ENCODE measurements at regions of chr9 and their contacts with region 1.

Region 1: DNA sequence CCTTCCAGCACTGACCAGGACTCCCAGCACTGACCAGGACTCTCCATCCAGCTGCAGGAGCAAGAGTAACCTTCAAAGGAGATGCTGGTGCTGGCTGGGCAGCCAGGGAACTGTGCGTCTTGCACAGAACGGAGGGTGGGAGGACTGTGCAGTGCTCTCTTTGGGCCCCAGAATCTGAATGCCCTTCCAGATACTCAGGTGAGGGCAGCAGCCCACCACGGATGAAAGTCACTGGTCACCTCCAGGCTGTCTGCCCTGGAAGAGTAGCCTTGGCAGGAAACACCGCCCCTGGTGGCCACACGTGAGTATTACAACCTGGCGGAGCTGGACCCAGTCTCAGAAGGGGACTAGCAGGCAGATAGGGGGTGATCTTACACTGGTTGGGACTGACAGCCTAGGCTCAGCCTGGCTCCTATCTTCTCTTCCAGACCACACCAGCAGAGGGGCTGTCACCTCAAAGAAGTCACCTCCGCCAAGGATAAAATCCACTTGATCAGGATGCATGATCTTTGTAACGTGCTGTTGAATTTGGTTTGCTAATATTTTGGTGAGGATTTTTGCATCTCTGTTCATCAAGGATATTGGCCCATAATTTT is 4.8 kb upstream of the SARDH start:
- DNase-seq: peak; percentile 45 to 78 (median 63)
- H3K4me3 ChIP-seq: no peak overlapping the region
- H3K4me3 Mint-ChIP-seq: no peak overlapping the region
- H3K27ac ChIP-seq: no peak overlapping the region
- H3K27ac Mint-ChIP-seq: peak overlapping the region in 1 of 8 donors; percentile 26
- H3K4me1 ChIP-seq: peaks cover 11% of the 10 kb centered on the region
- H3K4me1 Mint-ChIP-seq: peaks cover 0 to 12% (median 4%) of the 10 kb centered on the region in 3 donors
- H3K27me3 ChIP-seq: no peaks in the 10 kb centered on the region
- H3K27me3 Mint-ChIP-seq: peaks cover 4 to 28% of the 10 kb centered on the region in 2 donors

Region 2: GRCh38 chr9:133650026-133650425 is 92.9 kb before region 1 on chr9:
- CTCF ChIA-PET with region 1: no interaction called
- POLR2A ChIA-PET with region 1: no interaction called
- DNase-seq: no peak
- H3K4me3 ChIP-seq: no peak overlapping the region
- H3K4me3 Mint-ChIP-seq: no peak overlapping the region
- H3K27ac ChIP-seq: no peak overlapping the region
- H3K27ac Mint-ChIP-seq: peak overlapping the region in 1 of 8 donors; percentile 40
- H3K4me1 ChIP-seq: no peaks in the 10 kb centered on the region
- H3K4me1 Mint-ChIP-seq: no peaks in the 10 kb centered on the region
- H3K27me3 ChIP-seq: peaks cover 4% of the 10 kb centered on the region
- H3K27me3 Mint-ChIP-seq: peaks cover 12 to 25% of the 10 kb centered on the region in 2 donors

Region 3: DNA sequence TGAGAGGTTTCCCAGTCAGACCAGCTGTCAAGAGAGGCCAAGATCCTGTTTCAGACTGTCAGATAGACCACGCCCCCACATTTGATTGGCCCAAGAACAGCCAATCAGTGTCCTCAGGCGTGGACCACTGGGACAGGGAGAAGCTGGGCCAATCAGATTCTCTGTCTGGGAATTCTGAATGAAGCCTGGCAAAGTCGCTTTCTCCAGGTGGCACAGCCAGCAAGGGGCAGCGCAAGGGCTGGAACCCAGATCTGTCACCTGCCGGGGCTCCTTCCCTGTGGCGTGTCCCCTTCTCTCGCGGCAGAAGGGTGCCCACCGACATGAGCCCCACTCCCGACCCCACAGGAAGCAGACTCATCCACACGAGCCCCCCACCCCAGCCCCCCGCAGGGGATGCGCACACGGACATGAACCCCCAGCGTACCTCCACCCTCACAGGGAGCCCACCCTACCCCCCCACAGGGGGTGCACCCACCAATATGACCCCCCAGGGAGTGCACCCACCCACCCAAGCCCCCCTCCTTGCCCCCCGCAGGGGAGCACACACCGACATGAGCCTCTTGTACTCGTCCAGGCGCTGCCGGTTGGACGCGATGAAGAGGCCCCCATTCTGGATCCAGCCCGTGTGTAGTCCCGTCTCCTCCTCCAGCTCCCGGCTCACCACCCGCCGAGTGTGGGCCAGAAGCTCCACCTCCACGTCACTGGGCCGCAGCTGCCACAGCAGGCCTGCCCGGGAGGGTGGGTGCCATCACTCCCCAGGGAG is 10.9 kb before region 1 on chr9:
- CTCF ChIA-PET with region 1: interaction called, 12 read pairs
- POLR2A ChIA-PET with region 1: no interaction called
- DNase-seq: no peak
- H3K4me3 ChIP-seq: no peak overlapping the region
- H3K4me3 Mint-ChIP-seq: no peak overlapping the region
- H3K27ac ChIP-seq: no peak overlapping the region
- H3K27ac Mint-ChIP-seq: no peak overlapping the region
- H3K4me1 ChIP-seq: peaks cover 2% of the 10 kb centered on the region
- H3K4me1 Mint-ChIP-seq: peaks cover under 1 to 2% (median under 1%) of the 10 kb centered on the region in 3 donors
- H3K27me3 ChIP-seq: no peaks in the 10 kb centered on the region
- H3K27me3 Mint-ChIP-seq: peaks cover under 1 to 4% of the 10 kb centered on the region in 2 donors

Region 4: DNA sequence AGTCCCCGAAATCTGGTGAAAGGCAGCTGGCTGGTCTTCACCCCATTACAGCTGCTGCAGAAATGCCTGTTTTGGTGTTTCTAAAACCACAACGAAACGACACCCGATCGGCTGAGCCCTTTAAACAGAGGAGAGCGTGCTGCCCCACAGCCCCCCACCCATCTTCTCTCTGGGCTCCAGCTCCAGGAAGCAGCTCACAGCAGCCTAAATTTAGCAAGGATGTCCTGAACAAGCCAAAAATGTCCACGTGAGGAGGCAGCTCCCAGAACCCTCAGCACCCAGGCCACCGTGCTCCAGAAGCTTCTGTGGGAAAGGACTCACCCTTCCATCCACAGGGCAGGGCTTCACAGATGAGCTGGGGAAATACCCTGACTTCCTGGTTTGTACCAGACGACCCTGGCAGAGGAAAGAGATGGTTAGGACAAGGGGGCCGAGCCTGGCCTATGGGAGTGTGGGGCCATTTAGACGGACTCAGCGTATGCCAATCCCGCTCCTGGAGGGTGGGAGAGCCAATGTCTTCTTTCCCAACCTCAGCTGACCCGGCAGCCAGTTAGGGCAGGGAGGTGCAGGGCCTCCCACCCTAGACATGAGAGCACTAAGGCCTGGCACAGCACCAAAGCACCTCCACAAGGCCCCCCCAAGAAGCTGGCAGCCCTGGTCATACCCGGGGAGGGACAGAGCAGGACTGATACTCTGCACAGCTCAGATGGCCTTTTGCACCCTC is 34.3 kb after region 1 on chr9:
- CTCF ChIA-PET with region 1: no interaction called
- POLR2A ChIA-PET with region 1: no interaction called
- DNase-seq: no peak
- H3K4me3 ChIP-seq: no peak overlapping the region
- H3K4me3 Mint-ChIP-seq: no peak overlapping the region
- H3K27ac ChIP-seq: no peak overlapping the region
- H3K27ac Mint-ChIP-seq: no peak overlapping the region
- H3K4me1 ChIP-seq: no peaks in the 10 kb centered on the region
- H3K4me1 Mint-ChIP-seq: no peaks in the 10 kb centered on the region
- H3K27me3 ChIP-seq: no peaks in the 10 kb centered on the region
- H3K27me3 Mint-ChIP-seq: peaks cover 0 to 1% of the 10 kb centered on the region in 2 donors